Activated CD8-positive, alpha-beta T cell treated with anti-CD3 and anti-CD28 coated beads for 36 hours (primary cell): ENCODE measurements at regions of chr13 and their contacts with region 1.

Region 1: DNA sequence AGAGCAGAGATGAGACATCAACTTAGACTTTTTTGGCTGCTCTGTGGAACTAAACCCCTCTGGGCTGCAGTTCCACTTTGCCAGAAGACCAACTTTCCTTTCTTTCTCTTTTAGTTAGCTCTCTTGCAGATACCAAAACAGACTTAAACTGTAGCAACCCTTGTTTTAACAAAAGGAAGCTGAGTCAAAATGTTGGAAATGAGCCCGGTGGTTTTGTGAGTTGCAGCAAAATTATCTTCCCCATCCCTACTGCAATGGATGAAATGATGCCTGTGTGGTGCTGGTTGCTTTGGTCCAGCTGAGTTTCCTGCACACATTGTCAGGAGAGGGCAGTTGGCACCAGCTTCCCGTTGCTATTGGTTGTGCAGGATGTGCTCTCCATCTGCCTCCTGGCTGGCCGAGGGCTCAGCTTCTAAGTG is 115.3 kb downstream of the LRCH1 start:
- DNase-seq: peak; percentile 33
- ATAC-seq: peak; percentile 40
- H3K4me3 Mint-ChIP-seq: peak overlapping the region; percentile 76
- H3K27ac Mint-ChIP-seq: peak overlapping the region; percentile 86
- H3K4me1 Mint-ChIP-seq: peaks cover 39% of the 10 kb centered on the region
- H3K27me3 Mint-ChIP-seq: no peaks in the 10 kb centered on the region
- CTCF ChIP-seq: no peak

Region 2: DNA sequence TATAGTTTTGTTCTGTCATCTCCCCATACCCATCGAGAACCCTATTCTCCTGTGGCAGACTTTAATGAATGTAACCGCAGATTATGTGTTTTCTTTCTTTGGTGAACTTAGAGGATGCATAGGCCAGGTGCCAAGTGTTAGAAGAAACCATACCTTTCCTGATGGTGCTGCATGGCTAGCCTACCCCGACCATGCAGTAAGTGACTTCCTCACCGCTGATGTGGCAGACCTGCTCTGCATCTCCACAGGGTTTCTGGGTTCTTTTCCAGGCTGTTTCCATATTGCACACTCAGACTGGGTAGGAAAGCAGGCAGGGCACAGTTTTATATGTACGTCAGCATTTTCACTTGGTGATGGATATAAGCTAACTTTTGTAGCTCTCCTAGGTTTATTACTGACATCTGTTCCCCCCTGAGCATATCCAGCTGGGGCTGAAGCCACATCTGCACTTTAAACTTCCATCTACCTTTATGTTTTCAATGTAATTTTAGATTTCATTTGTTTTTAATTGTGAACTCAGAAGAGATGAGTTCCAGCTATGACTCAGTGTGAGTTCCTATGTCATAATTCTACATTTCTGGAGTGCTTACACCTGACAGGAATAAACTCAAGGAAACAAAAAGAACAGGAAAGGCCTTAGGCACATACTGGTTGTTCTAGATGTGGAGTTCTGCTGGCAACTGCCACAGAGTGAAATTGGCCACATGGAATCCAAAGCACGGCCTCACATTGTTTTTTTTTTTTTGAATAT is 73.0 kb before region 1 on chr13:
- CTCF ChIA-PET with region 1: no interaction called
- POLR2A ChIA-PET with region 1: interaction called, 3 read pairs
- intact Hi-C with region 1: loop called (anchors 5 kb)
- DNase-seq: no peak
- ATAC-seq: no peak
- H3K4me3 Mint-ChIP-seq: no peak overlapping the region
- H3K27ac Mint-ChIP-seq: no peak overlapping the region
- H3K4me1 Mint-ChIP-seq: peaks cover 85% of the 10 kb centered on the region
- H3K27me3 Mint-ChIP-seq: no peaks in the 10 kb centered on the region
- CTCF ChIP-seq: no peak

Region 3: GRCh38 chr13:46761853-46762252 is 93.5 kb after region 1 on chr13:
- CTCF ChIA-PET with region 1: no interaction called
- POLR2A ChIA-PET with region 1: no interaction called
- intact Hi-C with region 1: no loop called
- DNase-seq: no peak
- ATAC-seq: no peak
- H3K4me3 Mint-ChIP-seq: no peak overlapping the region
- H3K27ac Mint-ChIP-seq: no peak overlapping the region
- H3K4me1 Mint-ChIP-seq: peaks cover 3% of the 10 kb centered on the region
- H3K27me3 Mint-ChIP-seq: no peaks in the 10 kb centered on the region
- CTCF ChIP-seq: no peak